ENCODE measurements at regions of chr15 and their contacts with region 1.

Region 1: GRCh38 chr15:98904544-98904943 is 103.0 kb downstream of the PGPEP1L start:
- DNase-seq: no peak
- H3K4me3 ChIP-seq: no peak overlapping the region
- CTCF ChIP-seq: peak; percentile 71

Region 2: DNA sequence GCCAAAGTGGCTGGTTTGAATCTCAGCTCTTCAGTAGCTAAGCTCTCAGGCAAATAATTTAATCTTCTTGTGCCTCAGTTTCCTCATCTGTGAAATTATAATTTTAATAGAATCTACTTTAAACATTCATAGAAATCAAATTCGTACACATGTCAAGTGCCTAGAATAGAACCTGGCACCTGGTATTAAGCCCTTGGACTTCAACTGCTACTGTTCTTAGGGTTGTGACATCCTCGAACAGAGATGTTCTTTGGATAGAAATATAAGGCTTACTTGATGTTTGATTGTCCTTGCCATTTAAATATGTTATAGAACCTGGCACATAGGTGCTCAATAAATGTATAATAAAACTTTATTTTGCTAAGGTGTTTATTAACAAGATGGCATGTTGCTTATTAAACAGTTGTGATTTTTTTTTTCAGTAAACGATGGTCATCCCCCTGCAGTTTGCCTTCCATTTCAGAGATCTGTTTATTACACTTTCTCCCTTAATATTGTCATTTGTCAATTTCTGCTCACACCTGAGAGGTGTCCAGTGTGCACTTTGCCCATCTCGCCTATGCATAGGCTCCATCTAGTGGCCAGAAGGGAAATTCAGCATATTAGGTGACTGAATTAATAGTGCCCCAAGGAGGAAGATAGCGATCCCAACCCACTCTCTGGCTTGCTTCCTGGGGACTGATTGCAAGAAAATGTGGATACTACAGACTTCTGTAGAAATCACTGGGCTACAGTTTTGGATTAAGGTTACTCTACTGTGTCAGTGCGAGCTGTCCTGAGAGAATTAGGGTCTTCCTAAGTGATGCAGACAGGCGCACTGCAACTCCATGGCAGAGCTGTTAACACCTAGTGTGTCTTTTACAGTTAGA is 245.5 kb before region 1 on chr15:
- CTCF ChIA-PET with region 1: interaction called, 17 read pairs
- POLR2A ChIA-PET with region 1: no interaction called
- DNase-seq: no peak
- H3K4me3 ChIP-seq: no peak overlapping the region
- CTCF ChIP-seq: peak; percentile 70

Region 3: GRCh38 chr15:98845107-98845884 is 59.2 kb before region 1 on chr15:
- CTCF ChIA-PET with region 1: interaction called, 10 read pairs
- POLR2A ChIA-PET with region 1: no interaction called
- DNase-seq: no peak
- H3K4me3 ChIP-seq: no peak overlapping the region
- CTCF ChIP-seq: no peak

Region 4: DNA sequence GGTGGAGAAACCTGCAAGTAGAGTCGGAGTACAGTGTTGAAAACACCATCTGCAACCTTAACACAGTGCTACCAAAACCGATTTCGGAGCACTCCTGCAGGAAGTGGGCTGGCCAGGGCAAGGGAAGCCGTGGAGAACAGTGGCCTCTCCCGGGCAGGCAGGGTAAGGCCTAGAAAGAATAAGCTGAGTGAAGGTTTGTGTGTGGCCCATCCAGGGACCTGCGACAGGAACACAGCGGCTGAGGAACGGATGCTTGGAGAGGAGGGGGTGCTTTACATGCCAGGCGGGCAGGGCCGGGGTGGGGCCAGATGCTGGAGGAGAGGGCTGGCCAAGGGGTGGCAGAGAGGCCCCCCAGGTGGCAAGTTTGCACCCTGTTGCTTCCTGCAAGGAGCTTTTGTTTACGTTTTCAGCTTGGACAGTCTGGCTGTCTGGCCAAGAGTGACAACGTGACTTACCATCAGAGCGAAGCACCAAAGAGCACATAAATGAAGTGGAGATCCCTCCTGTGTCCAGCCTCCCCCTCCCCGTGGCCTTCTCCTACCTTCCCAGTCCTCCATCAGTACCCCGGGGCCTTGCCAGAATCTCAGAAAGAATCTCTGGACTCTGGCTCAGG is 53.5 kb before region 1 on chr15:
- CTCF ChIA-PET with region 1: interaction called, 25 read pairs
- POLR2A ChIA-PET with region 1: no interaction called
- DNase-seq: no peak
- H3K4me3 ChIP-seq: peak overlapping the region; percentile 64
- CTCF ChIP-seq: peak; percentile 83

Region 5: DNA sequence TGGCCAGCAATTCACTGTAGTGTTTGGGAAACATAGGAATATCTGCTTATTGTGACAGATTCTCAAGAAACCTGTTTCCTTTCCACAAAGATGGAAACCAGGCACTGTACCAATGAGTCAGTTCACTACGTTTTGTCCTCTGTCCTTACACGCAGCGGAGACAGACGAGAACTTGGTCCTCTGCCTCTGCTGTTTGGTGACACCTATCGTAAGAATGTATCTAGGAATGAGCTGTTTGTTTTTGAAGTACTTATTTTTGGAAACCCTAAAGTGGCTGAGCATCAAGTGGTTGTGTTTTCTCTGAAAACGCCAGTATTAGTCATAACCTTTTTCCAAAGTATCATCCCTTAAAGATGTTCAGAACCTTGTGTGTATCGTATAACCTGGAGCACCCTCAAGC is 10.1 kb after region 1 on chr15:
- CTCF ChIA-PET with region 1: interaction called, 15 read pairs
- POLR2A ChIA-PET with region 1: no interaction called
- DNase-seq: peak; percentile 93
- H3K4me3 ChIP-seq: no peak overlapping the region
- CTCF ChIP-seq: no peak